ENCODE measurements at regions of chr17 and their contacts with region 1.

Region 1: GRCh38 chr17:77054936-77055335 is 85.8 kb upstream of the SEC14L1 start:
- DNase-seq: no peak
- H3K4me3 ChIP-seq: no peak overlapping the region
- H3K27ac ChIP-seq: no peak overlapping the region
- H3K4me1 ChIP-seq: no peaks in the 10 kb centered on the region
- H3K27me3 ChIP-seq: peaks cover 25% of the 10 kb centered on the region
- CTCF ChIP-seq: no peak
- POLR2A ChIP-seq: no peak

Region 2: DNA sequence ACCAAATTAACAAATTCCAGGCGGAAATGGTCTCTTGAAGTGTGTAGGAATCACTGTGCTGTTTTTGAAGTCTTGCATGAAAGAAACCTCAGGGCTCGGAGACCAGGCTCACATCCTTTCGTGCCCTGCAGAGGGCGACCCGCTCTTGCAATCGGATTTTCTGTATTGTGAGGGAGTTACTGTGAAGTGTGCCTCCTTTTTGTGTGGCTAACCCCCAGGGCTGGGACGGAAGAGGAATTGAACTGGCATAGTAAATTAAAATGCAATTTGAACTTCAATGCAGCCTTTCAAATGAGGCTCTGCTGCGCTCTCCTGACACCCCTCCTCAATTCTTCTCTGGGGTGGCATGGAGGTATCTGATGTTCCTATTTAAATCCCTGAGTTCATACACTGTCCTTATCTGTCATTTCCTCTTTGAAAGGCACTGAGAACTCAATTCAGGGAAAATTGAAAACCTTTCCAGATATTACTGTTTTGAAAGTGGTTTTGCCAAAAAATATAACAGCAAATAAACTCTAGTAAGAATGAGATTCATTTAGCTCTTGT is 238.3 kb before region 1 on chr17:
- intact Hi-C with region 1: loop called in 1 of 2 experiments (anchors 5 kb)
- DNase-seq: peak in 6 of 7 donors; percentile 27 to 67 (median 44)
- H3K4me3 ChIP-seq: no peak overlapping the region
- H3K27ac ChIP-seq: no peak overlapping the region
- H3K4me1 ChIP-seq: no peaks in the 10 kb centered on the region
- H3K27me3 ChIP-seq: no peaks in the 10 kb centered on the region
- CTCF ChIP-seq: peak; percentile 29 to 50 (median 39)
- POLR2A ChIP-seq: no peak

Region 3: DNA sequence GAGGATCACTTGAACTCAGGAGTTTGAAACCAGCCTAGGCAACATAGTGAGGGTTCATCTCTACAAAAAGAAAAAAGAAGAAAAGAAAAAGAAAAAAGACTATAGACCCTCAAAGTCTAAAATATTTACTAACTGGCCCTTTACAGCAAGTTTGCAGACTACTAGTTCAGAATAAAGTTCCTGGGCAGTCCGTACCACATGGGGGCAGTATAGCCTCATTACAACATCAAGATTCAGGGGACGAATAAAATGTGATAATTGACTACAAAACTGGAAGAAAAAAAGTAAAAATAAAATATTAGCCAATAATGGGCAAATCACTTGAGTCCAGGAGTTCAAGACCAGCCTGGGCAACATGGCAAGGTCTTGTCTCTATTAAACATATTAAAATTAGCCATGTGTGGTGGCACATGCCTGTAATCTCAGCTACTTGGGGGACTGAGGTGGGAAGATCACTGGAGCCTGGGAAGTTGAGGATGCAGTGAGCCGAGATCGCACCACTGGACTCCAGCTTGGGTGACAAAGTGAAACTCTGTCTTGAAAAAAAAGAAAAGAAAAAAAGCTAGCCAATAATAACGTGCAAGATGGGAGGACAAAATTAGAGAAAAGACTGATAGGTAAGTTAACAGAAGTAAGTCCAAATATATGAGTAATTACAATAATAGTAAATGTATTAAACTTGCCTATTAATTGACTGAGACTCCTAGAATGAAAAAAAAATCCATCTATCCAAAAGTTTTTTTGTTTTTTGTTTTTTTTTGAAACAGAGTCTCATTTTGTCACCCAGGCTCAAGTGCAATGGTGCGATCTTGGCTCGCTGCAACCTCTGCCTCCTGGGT is 43.5 kb before region 1 on chr17:
- intact Hi-C with region 1: no loop called
- DNase-seq: peak in 6 of 7 donors; percentile 31 to 72 (median 53)
- H3K4me3 ChIP-seq: no peak overlapping the region
- H3K27ac ChIP-seq: no peak overlapping the region
- H3K4me1 ChIP-seq: no peaks in the 10 kb centered on the region
- H3K27me3 ChIP-seq: peaks cover 7% of the 10 kb centered on the region
- CTCF ChIP-seq: peak; percentile 29 to 61 (median 51)
- POLR2A ChIP-seq: no peak

Measured in adrenal gland (tissue), 19 donors.